K562 (cell line): ENCODE measurements at regions of chr7 and their contacts with region 1.

Region 1: DNA sequence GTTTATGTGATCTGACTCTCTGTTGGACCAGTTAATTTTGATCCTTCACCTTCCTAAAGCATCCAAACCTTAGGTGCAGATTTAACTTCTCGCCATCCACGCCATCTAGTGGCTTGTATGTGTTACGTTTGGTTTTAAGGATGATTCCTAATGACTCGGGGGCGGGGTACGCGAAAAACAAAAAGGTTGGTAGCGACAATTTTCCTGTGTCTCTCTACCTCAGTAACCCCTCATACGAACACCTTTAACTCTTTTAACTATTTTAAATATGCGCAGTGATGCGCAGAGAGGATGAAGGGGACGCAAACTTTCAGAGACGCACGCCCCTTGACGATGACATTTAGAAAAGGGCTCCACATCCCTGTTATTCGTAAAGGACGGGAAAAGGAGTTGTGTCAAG is 714 bp upstream of the KCND2 start:
- DNase-seq: peak; percentile 56 to 70 (median 64)
- ATAC-seq: peak; percentile 85
- H3K4me3 ChIP-seq: no peak overlapping the region
- H3K27ac ChIP-seq: no peak overlapping the region
- H3K4me1 ChIP-seq: peaks cover 0 to 12% of the 10 kb centered on the region in 2 experiments; a peak in 2 of 5 replicates
- H3K27me3 ChIP-seq: peaks cover 8 to 13% of the 10 kb centered on the region in 2 experiments; a peak in 3 of 5 replicates
- CTCF ChIP-seq: peak; percentile 56 to 80 (median 71)
- EP300 ChIP-seq: no peak
- POLR2A ChIP-seq: no peak
- RAD21 ChIP-seq: peak; percentile 52 to 81

Region 2: DNA sequence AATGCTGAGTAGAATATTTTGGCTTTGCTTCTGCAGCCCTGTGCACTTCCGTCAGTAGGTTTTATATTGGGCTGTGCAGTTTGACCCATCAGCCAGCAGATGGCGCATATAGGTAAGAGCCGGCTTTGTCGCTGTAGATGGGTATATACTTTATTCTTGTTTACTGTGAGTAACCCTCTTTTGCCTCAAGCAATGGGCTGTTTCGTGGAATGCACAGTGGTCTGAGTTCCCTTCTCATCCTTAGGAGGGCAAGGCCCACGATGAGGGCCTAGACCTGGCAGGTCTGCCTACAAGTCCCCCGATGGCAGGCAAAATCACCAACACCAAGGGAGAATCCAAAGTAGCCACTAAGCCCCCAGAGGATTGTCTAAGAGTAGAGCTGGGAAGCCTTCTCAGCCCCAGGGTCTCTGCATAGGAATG is 1002.2 kb before region 1 on chr7:
- CTCF ChIA-PET with region 1: interaction called, 6 read pairs
- POLR2A ChIA-PET with region 1: no interaction called
- in situ Hi-C with region 1: no loop called
- intact Hi-C with region 1: loop called (anchors 1 kb)
- DNase-seq: peak; percentile 42 to 71 (median 47)
- ATAC-seq: peak; percentile 93
- H3K4me3 ChIP-seq: no peak overlapping the region
- H3K27ac ChIP-seq: no peak overlapping the region
- H3K4me1 ChIP-seq: no peaks in the 10 kb centered on the region
- H3K27me3 ChIP-seq: no peaks in the 10 kb centered on the region
- CTCF ChIP-seq: peak; percentile 77 to 86 (median 81)
- EP300 ChIP-seq: no peak
- POLR2A ChIP-seq: no peak
- RAD21 ChIP-seq: peak; percentile 66 to 82

Region 3: DNA sequence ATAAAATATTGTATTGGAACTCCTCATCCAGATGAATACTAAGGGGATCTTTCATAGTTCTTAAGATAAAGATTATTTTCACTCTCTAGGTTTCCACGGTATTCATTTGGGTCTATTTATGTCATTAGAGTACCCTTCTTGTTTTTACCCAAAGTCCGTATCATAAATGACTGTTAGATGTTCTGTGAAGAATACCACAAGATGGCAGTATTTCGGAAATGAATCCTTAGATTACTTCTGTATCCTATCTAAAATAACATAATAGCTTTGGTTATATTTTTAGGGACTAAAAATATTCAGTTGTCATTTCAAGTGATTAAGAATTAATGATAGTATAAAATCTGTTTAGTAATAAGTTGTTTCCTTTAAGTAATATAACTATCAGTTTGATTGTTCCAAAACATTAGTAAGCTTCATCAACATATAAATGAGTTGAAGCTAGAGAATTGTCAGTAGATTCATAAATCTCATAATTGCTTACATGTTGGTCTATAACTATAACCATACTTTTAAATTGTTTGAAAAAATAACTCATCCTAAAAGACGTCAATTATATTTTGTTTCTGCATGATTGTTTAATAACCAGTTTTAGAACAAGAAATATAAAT is 336.7 kb before region 1 on chr7:
- CTCF ChIA-PET with region 1: no interaction called
- POLR2A ChIA-PET with region 1: no interaction called
- in situ Hi-C with region 1: no loop called
- intact Hi-C with region 1: loop called (anchors 10 kb)
- DNase-seq: peak in 1 of 4 experiments; percentile 64
- ATAC-seq: peak; percentile 76
- H3K4me3 ChIP-seq: no peak overlapping the region
- H3K27ac ChIP-seq: no peak overlapping the region
- H3K4me1 ChIP-seq: peaks cover 0 to 3% of the 10 kb centered on the region in 2 experiments; a peak in 1 of 5 replicates
- H3K27me3 ChIP-seq: no peaks in the 10 kb centered on the region
- CTCF ChIP-seq: peak in 2 of 3 experiments; percentile 35 to 55; a peak in 3 of 6 replicates
- EP300 ChIP-seq: no peak
- POLR2A ChIP-seq: no peak
- RAD21 ChIP-seq: peak; percentile 38 to 68

Region 4: GRCh38 chr7:120554960-120555571 is 282.8 kb after region 1 on chr7:
- CTCF ChIA-PET with region 1: no interaction called
- POLR2A ChIA-PET with region 1: no interaction called
- in situ Hi-C with region 1: no loop called
- intact Hi-C with region 1: loop called (anchors 5 kb)
- DNase-seq: peak; percentile 45 to 60 (median 50)
- ATAC-seq: peak; percentile 93
- H3K4me3 ChIP-seq: no peak overlapping the region
- H3K27ac ChIP-seq: no peak overlapping the region
- H3K4me1 ChIP-seq: no peaks in the 10 kb centered on the region
- H3K27me3 ChIP-seq: no peaks in the 10 kb centered on the region
- CTCF ChIP-seq: peak; percentile 47 to 68 (median 68); a peak in 5 of 6 replicates
- EP300 ChIP-seq: no peak
- POLR2A ChIP-seq: no peak
- RAD21 ChIP-seq: peak; percentile 61 to 80

Region 5: DNA sequence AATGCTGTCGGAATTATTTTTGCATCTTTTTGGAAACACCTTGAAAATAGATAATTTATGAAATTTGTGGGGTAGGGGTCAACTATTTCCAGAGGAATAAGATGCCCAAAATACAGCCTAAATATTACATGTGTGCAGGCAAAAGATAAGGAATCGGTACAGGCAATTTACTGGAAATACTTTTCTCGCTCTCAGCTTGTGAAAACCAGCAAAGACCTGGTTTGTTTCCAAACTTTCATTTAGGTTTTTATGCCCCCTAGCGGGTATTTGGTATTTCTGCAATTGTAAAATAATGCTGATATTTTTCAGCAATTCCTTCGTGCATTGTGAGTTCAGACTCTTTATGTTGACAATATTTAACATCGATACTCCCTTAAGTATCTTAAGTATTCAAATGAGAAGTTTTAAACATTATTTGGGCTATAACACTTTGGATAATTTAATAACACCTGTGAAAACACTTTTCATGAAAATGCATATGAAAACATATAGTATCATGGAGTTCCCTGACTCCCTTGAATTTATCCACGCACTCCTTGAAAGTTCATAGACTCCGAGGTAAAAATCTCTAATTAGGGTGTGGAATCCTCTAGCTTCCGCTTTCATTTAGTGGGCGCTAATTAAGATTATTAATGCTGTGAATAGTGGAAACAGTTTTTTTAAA is 453.2 kb after region 1 on chr7:
- CTCF ChIA-PET with region 1: no interaction called
- POLR2A ChIA-PET with region 1: no interaction called
- in situ Hi-C with region 1: no loop called
- intact Hi-C with region 1: loop called (anchors 10 kb)
- DNase-seq: peak; percentile 35 to 58 (median 42)
- ATAC-seq: peak; percentile 78
- H3K4me3 ChIP-seq: no peak overlapping the region
- H3K27ac ChIP-seq: no peak overlapping the region
- H3K4me1 ChIP-seq: no peaks in the 10 kb centered on the region
- H3K27me3 ChIP-seq: no peaks in the 10 kb centered on the region
- CTCF ChIP-seq: peak; percentile 49 to 86 (median 71); a peak in 5 of 6 replicates
- EP300 ChIP-seq: no peak
- POLR2A ChIP-seq: no peak
- RAD21 ChIP-seq: peak; percentile 69 to 84

Region 6: DNA sequence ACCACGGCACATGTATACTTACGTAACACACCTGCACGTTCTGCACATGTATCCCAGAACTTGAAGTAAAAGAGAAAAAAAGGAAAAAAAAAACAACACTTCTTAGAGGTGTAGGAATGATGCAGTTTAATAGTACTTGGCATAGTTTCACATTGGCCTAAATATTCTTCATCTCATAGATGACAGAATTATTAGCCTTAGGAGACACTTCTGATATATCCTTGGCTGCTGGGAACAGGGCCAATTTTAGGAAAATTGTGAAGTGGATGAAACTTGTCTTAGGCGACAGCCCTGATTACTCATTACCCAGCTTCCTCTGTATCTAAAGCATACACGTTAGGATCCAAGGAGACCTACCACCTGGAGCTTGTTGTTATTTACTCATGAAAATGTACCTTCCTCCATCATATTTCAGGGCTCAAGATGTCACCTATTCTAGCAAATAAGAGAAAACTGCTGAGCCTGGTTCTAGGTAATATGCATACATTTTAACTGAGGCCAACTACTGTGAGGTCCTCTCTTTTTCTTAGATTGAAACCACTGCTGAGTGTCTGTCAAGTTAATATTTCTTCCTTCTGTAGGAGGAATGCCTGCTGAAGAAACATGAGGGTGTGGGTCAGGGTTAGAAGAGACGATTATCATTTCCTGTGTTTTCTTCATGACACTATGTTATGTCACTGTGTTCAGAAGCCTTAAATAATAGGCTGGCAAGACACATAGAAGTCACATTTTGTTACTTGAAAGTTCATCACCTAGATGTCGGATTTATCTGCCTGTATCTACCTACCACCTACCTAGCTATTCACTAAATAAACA is 760.6 kb after region 1 on chr7:
- CTCF ChIA-PET with region 1: no interaction called
- POLR2A ChIA-PET with region 1: no interaction called
- in situ Hi-C with region 1: no loop called
- intact Hi-C with region 1: no loop called
- DNase-seq: peak in 2 of 4 experiments; percentile 40 to 70
- ATAC-seq: peak; percentile 57
- H3K4me3 ChIP-seq: no peak overlapping the region
- H3K27ac ChIP-seq: peak overlapping the region; percentile 58
- H3K4me1 ChIP-seq: peaks cover 8 to 54% of the 10 kb centered on the region in 2 experiments; a peak in 4 of 5 replicates
- H3K27me3 ChIP-seq: no peaks in the 10 kb centered on the region
- CTCF ChIP-seq: no peak
- EP300 ChIP-seq: peak; percentile 3; the same call in 1 of the 2 replicates
- POLR2A ChIP-seq: 0 out of 2 replicates have a peak, but pooled peaks have one; percentile 32
- RAD21 ChIP-seq: no peak